Activated T-helper 2 cell treated with anti-CD3 and anti-CD28 coated beads, Interferon-gamma antibody, Interleukin-2, Interleukin-4, amounts not matched to agents 10 μg/mL and 5 μg/mL and 100 μg/mL, durations not matched to agents 14 hours and 24 hours and 36 hours (primary cell): ENCODE measurements at regions of chr14 and their contacts with region 1.

Region 1: DNA sequence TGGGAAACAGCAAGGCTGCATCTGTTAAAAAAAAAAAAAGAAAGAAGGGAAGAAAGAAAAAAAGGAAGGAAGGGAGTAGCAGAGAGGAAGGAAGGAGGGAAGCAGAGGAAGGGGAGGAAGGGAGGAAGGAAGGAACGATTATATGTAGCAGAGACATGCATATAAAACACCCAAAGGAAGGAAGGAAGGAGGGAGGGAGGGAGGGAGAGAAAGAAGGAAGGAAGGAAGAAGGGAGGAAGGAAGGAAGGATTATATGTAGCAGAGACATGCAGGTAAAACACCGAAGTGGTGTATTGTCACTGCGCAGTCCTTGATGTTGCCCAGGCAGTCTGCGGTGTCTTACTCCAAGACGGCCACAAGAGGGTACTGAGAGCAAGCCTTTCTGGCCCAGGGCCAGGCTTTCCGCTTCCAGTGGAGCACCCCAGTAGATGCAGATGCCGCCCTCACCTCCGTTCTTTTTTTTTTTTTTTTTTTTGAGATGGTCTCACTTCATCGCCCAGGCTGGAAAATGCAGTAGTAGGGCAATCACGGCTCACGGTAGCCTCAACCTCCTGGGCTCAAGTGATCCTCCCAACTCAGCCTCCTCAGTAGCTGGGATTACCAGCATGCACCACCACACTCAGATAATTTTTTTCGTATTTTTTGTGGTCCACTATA is 5.8 kb upstream of the LBHD2 start:
- DNase-seq: peak; percentile 67
- H3K4me3 Mint-ChIP-seq: no peak overlapping the region
- H3K27ac Mint-ChIP-seq: no peak overlapping the region
- H3K4me1 Mint-ChIP-seq: no peaks in the 10 kb centered on the region
- H3K27me3 Mint-ChIP-seq: peaks cover 5% of the 10 kb centered on the region

Region 2: DNA sequence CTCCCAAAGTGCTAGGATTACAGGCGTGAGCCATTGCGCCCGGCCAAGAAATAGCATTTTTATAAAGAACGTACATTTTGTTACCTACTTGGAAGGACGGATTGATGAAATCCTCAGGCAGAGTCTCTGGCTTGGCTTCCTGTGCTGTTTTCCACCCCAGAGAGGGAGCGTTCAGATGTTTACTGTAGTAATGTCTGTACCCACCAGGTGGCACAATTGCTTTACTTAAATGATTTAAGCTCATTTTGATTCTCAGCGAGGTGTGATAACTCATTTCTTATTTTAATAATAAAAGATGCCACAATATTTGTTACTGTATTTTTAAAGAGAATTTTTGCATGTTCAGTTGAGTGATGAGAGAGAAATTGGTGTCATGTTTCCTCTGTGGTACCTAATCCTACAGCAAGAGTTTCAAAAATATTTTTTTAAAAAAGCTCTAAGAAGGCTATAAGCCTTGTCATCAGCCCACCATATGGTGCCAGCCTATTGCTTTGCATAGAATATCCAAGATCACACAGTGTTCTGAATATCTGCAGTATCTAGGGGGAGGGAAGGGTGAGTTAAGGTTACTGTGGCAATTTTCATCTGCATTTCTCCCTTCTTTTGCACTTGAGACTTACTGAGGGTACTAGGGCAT is 383.6 kb before region 1 on chr14:
- intact Hi-C with region 1: loop called (anchors 10 kb)
- DNase-seq: peak; percentile 26
- H3K4me3 Mint-ChIP-seq: no peak overlapping the region
- H3K27ac Mint-ChIP-seq: no peak overlapping the region
- H3K4me1 Mint-ChIP-seq: peaks cover 27% of the 10 kb centered on the region
- H3K27me3 Mint-ChIP-seq: no peaks in the 10 kb centered on the region

Region 3: GRCh38 chr14:102966681-102967505 is 111.3 kb before region 1 on chr14:
- intact Hi-C with region 1: no loop called
- DNase-seq: no peak
- H3K4me3 Mint-ChIP-seq: no peak overlapping the region
- H3K27ac Mint-ChIP-seq: no peak overlapping the region
- H3K4me1 Mint-ChIP-seq: no peaks in the 10 kb centered on the region
- H3K27me3 Mint-ChIP-seq: no peaks in the 10 kb centered on the region

Region 4: DNA sequence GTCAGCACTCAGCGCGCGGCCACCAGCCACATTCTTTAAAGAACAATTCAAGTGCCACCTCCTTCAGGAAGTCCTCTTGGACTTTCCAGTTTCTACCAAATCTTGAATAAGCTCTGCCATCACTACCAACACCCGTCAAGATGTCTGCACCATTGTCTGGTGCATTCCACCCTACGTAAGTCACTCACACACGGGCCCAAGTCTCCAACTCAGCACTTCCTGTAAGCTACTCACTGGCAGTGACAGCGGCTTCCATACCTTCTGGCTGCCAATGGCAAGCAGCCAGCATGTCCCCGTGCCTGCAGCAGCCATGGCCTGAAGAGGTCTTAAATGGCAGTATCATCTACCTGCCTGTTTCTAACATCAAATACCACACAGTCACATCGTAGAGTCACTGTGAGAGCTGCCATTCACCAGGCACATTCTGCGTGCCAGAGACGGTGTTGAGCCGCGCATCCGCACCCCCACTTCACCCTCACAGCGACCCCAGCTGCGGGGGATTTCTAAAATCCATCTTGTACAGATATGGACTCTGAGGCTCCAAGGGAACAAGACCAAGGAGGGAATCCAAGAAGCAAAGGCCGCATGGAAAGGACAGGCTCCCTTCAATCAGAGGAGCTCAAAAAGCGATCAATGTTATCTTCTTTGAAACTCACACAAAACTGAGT is 69.2 kb before region 1 on chr14:
- intact Hi-C with region 1: no loop called
- DNase-seq: no peak
- H3K4me3 Mint-ChIP-seq: no peak overlapping the region
- H3K27ac Mint-ChIP-seq: no peak overlapping the region
- H3K4me1 Mint-ChIP-seq: no peaks in the 10 kb centered on the region
- H3K27me3 Mint-ChIP-seq: no peaks in the 10 kb centered on the region

Region 5: DNA sequence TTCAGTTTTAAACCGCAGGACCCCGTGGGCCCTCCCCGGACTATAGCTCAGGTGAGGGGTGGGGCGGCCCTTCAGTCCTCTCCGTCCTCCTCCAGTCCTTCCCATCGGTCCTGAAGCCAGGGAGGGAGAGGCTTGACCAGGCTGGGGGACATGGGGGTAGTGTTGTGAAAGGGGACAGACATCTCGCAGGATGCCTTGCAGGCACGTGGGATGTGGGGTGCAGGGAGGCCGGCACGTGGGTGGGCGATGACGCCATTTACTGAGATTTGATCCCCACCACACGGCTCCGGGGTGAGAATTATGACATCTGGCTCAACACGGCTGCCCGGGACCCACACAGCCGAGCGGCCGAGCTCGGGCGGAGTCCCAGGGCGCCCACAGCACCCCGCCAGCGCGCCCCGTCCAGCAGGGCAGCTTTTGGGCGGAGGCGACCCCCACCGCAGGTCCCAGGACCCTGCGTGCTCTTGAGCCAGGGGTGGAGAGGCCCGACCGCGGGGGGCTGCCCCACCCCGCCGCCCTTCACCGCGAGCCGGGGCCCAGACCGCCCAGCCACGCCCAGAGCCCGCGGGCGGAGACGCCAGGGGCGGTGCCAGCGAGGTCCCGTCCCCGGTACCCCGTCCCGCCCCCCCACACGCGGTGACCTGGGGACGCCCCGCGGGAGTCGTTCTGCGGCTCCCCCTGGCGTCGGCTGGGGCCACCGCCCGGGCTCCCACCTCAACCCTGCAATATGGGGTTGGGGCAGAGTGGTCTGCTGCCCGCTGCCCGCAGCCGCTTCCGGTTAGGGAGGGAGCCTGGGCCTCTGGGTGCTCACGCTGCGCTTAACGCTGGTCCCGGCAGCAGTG is 13.0 kb after region 1 on chr14:
- intact Hi-C with region 1: loop called (anchors 1 kb)
- DNase-seq: peak; percentile 62
- H3K4me3 Mint-ChIP-seq: peak overlapping the region; percentile 30
- H3K27ac Mint-ChIP-seq: no peak overlapping the region
- H3K4me1 Mint-ChIP-seq: peaks cover 4% of the 10 kb centered on the region
- H3K27me3 Mint-ChIP-seq: no peaks in the 10 kb centered on the region

Region 6: GRCh38 chr14:103292426-103293374 is 214.5 kb after region 1 on chr14:
- intact Hi-C with region 1: loop called (anchors 2 kb)
- DNase-seq: peak; percentile 54
- H3K4me3 Mint-ChIP-seq: no peak overlapping the region
- H3K27ac Mint-ChIP-seq: no peak overlapping the region
- H3K4me1 Mint-ChIP-seq: peaks cover 3% of the 10 kb centered on the region
- H3K27me3 Mint-ChIP-seq: peaks cover 26% of the 10 kb centered on the region